Activated T-helper 1 cell treated with anti-CD3 and anti-CD28 coated beads, Interleukin-12 subunit alpha, Interleukin-12 subunit beta, Interleukin-2, Interleukin-4 antibody, amounts not matched to agents 30 ng/mL and 10 ng/mL and 1 ng/mL, durations not matched to agents 14 hours and 24 hours and 36 hours (primary cell): ENCODE measurements at regions of chr12 and their contacts with region 1.

Region 1: DNA sequence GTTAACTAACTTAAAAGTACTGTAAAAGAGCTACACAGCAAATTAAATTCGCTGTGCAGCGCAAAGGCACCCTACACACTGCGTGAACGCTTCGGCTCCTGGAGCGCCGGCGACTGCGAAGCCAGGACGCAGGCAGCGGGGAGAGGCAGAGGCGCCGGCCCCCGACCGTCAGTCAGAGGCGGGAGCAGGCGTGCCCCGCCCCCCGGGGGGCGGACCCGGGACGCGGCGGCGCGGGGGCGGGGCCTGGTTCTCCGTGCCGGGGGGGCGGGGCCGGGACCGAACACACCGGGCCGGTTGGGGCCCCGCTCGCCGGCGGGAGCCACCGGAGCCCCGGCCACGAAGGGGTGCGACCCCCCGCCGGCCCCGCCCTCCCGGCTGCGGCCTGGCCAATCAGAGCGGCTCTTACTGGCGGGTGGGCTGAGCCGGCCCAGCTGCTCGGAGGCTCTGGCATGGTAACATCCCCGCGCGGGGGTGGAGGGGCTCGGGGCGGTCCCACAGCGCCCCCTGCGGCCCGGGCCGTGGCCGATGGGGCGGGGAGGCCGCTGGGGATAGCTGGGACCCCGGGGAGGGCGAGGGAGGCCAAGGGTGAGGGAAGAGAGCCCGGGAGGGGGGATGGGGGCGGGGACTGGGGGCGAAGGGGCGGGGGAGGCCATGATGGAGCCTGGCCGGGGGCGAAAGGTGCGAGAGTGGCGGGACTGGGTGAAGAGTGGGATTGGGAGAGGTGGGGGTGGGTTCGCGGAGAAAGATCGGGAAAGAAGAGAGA is at the start of gene PRPF40B:
- DNase-seq: peak; percentile 81
- H3K4me3 Mint-ChIP-seq: peak within 1 kb of the TSS; percentile 83
- H3K27ac Mint-ChIP-seq: peak within 1 kb of the TSS; percentile 81
- H3K4me1 Mint-ChIP-seq: peaks cover 26% of the 10 kb centered on the region
- H3K27me3 Mint-ChIP-seq: peaks cover 18% of the 10 kb centered on the region
- total RNA-seq, gene PRPF40B: 10.4 and 12.7 TPM in 2 replicates

Region 2: DNA sequence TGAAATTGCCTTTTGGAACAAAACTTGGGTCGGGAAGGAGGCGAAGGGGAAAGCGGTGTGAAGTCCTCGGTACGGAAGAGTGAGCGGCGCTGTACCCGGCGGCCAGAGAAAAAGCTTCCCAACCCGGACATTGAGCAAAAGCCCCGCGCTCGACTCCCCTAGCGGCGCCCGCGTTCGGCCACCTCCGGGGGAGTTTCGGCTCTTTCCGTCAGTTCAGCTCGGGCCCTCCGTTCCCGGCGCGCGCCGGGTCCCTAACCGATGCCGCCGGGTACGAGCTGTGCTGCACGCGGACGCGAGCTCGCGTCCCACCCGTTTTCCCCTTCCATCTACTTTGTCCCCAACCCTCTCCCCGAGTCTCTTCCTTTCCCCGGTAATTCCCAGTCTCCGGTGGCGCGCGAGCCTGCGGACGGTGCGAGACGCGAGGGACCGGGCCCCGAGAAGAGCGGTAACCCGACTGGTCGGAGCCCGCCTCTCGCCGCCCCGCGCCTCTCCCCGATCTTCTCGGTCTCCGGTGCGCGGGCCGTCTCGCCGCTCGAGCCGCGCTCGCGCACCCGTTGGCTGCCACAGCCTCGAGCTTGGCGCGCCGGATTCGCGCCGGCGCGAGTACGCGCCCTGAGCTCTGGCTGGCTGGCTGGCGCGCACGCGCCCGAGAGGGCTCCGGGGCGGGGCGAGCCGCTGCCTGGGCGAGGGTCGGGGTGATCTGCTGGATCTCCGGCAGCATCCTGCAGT is 256.5 kb before region 1 on chr12:
- intact Hi-C with region 1: loop called (anchors 5 kb)
- DNase-seq: peak; percentile 89
- H3K4me3 Mint-ChIP-seq: peak overlapping the region; percentile 87
- H3K27ac Mint-ChIP-seq: peak overlapping the region; percentile 94
- H3K4me1 Mint-ChIP-seq: peaks cover 48% of the 10 kb centered on the region
- H3K27me3 Mint-ChIP-seq: no peaks in the 10 kb centered on the region

Region 3: GRCh38 chr12:49567611-49568441 is 55.5 kb before region 1 on chr12 and contains the start of gene MCRS1:
- intact Hi-C with region 1: loop called (anchors 1 kb)
- DNase-seq: peak; percentile 85
- H3K4me3 Mint-ChIP-seq: peak within 1 kb of the TSS; percentile 95
- H3K27ac Mint-ChIP-seq: peak within 1 kb of the TSS; percentile 96
- H3K4me1 Mint-ChIP-seq: peaks cover 57% of the 10 kb centered on the region
- H3K27me3 Mint-ChIP-seq: no peaks in the 10 kb centered on the region
- total RNA-seq, gene MCRS1: 77.1 and 77.9 TPM in 2 replicates

Region 4: GRCh38 chr12:49662998-49663843 is 39.9 kb after region 1 on chr12:
- intact Hi-C with region 1: loop called (anchors 2 kb)
- DNase-seq: peak; percentile 68
- H3K4me3 Mint-ChIP-seq: peak overlapping the region; percentile 72
- H3K27ac Mint-ChIP-seq: peak overlapping the region; percentile 91
- H3K4me1 Mint-ChIP-seq: peaks cover 75% of the 10 kb centered on the region
- H3K27me3 Mint-ChIP-seq: no peaks in the 10 kb centered on the region

Region 5: DNA sequence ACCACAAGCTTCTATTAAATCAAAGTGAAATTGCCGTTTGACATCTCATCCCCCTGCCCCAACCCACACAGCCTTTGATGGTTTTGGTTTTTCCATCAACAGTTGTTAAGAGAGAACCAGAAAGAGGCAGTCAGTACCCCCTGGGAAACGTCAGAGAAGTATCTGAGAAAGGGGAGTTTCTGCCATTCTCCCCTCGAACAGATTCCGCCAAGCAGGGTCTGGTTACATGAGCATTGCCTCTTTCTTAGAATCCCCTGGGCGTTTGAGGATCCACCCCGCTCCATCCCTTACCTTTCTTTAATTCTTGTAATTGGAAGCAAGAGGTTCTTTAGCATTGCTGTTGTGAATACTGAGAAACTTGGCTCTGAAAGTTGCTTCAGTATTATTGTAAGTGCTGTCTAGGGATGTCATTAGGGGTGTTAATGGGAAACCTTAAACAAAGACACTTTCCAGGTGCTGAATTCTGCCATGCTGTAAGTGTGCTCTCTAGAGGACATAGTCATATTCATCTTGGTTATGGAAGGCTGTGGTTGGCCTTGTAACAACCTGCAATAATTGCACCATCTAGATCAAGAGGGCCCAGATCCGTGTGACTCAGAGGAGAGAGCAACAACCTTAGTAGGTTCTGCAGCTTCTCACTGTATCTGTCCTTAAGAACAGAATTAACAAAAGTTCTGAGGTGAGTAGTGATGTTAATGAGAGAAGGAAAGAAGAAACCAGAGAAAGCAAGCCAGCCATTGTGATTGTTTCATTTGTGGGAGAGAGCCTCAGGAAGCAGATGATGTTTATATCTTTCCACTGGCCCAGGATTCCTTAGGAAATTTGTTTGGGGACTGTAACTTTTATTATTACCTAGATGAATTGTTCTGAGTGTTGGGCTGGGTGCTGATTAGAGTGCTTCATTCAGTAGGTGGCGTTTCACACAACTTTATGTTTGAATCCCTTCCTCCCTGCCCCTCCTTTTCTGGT is 127.0 kb after region 1 on chr12:
- intact Hi-C with region 1: loop called (anchors 1 kb)
- DNase-seq: peak; percentile 20
- H3K4me3 Mint-ChIP-seq: peak overlapping the region; percentile 40
- H3K27ac Mint-ChIP-seq: peak overlapping the region; percentile 85
- H3K4me1 Mint-ChIP-seq: peaks cover 64% of the 10 kb centered on the region
- H3K27me3 Mint-ChIP-seq: no peaks in the 10 kb centered on the region

Region 6: GRCh38 chr12:49842519-49843352 is 219.4 kb after region 1 on chr12 and contains the start of gene BCDIN3D:
- intact Hi-C with region 1: loop called (anchors 5 kb)
- DNase-seq: peak; percentile 91
- H3K4me3 Mint-ChIP-seq: peak within 1 kb of the TSS; percentile 91
- H3K27ac Mint-ChIP-seq: peak within 1 kb of the TSS; percentile 84
- H3K4me1 Mint-ChIP-seq: peaks cover 29% of the 10 kb centered on the region
- H3K27me3 Mint-ChIP-seq: peaks cover 1% of the 10 kb centered on the region
- total RNA-seq, gene BCDIN3D: 3.6 and 4.0 TPM in 2 replicates